ENCODE measurements at regions of chr6 and their contacts with region 1.

Region 1: GRCh38 chr6:39980839-39981580 is 46.7 kb upstream of the MOCS1 start:
- DNase-seq: peak in 2 of 10 donors; percentile 12 to 19

Region 2: GRCh38 chr6:40308533-40309306 is 327.7 kb after region 1 on chr6:
- intact Hi-C with region 1: loop called (anchors 2 kb)
- DNase-seq: peak in 5 of 10 donors; percentile 57 to 89 (median 74)

Region 3: DNA sequence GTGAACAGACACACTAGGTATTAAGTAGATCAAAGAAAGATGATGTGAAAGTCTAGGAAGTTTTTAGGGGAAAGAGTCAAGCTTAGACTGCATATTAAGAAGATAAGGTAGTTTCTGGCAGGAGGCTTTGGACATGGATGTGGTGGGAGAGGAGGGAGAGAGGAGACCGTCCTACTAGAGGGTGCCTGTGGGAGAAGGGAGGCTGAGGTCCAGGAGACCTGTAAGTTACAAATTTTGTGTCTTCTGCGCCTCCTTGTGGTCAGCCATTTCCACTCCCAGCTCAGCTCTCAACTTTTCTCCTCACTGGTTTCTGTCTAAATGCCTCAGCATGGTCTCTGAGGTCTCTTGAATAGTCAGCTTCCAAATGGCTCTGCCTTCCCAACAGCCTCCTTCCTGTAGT is 864.5 kb after region 1 on chr6:
- intact Hi-C with region 1: loop called (anchors 10 kb)
- DNase-seq: peak in 3 of 10 donors; percentile 12 to 18 (median 17)

Region 4: GRCh38 chr6:41027799-41028628 is 1047.0 kb after region 1 on chr6:
- intact Hi-C with region 1: loop called (anchors 5 kb)
- DNase-seq: peak; percentile 49 to 97 (median 83)

Measured in posterior cingulate gyrus (tissue), 11 donors.